SK-N-SH (cell line): ENCODE measurements at regions of chr14 and their contacts with region 1.

Region 1: GRCh38 chr14:69937367-69938081 is 58.3 kb downstream of the SMOC1 start:
- DNase-seq: no peak
- H3K4me3 ChIP-seq: no peak overlapping the region
- H3K27ac ChIP-seq: no peak overlapping the region; a peak in 1 of 4 replicates
- H3K4me1 ChIP-seq: peaks cover 0 to 36% of the 10 kb centered on the region in 2 experiments; a peak in 2 of 4 replicates
- H3K27me3 ChIP-seq: no peaks in the 10 kb centered on the region
- CTCF ChIP-seq: no peak
- EP300 ChIP-seq: no peak
- RAD21 ChIP-seq: no peak

Region 2: GRCh38 chr14:69673578-69674305 is 263.8 kb before region 1 on chr14:
- CTCF ChIA-PET with region 1: no interaction called
- POLR2A ChIA-PET with region 1: no interaction called
- DNase-seq: no peak
- H3K4me3 ChIP-seq: no peak overlapping the region
- H3K27ac ChIP-seq: no peak overlapping the region
- H3K4me1 ChIP-seq: peaks cover 0 to 9% of the 10 kb centered on the region in 2 experiments; a peak in 1 of 4 replicates
- H3K27me3 ChIP-seq: no peaks in the 10 kb centered on the region
- CTCF ChIP-seq: no peak
- EP300 ChIP-seq: no peak
- RAD21 ChIP-seq: no peak

Region 3: GRCh38 chr14:69955855-69956845 is 18.6 kb after region 1 on chr14:
- CTCF ChIA-PET with region 1: interaction called, 10 read pairs
- POLR2A ChIA-PET with region 1: no interaction called
- DNase-seq: no peak
- H3K4me3 ChIP-seq: no peak overlapping the region
- H3K27ac ChIP-seq: no peak overlapping the region
- H3K4me1 ChIP-seq: peaks cover 0 to 11% of the 10 kb centered on the region in 2 experiments; a peak in 1 of 4 replicates
- H3K27me3 ChIP-seq: no peaks in the 10 kb centered on the region
- CTCF ChIP-seq: no peak
- EP300 ChIP-seq: no peak
- RAD21 ChIP-seq: no peak